KBM-7 (cell line): ENCODE measurements at regions of chr3 and their contacts with region 1.

Region 1: GRCh38 chr3:72818092-72818773 is 30.0 kb downstream of the SHQ1 start:
- DNase-seq: peak; percentile 21

Region 2: GRCh38 chr3:71710906-71711494 is 1107.2 kb before region 1 on chr3:
- in situ Hi-C with region 1: loop called (anchors 25 kb)
- DNase-seq: peak; percentile 46

Region 3: DNA sequence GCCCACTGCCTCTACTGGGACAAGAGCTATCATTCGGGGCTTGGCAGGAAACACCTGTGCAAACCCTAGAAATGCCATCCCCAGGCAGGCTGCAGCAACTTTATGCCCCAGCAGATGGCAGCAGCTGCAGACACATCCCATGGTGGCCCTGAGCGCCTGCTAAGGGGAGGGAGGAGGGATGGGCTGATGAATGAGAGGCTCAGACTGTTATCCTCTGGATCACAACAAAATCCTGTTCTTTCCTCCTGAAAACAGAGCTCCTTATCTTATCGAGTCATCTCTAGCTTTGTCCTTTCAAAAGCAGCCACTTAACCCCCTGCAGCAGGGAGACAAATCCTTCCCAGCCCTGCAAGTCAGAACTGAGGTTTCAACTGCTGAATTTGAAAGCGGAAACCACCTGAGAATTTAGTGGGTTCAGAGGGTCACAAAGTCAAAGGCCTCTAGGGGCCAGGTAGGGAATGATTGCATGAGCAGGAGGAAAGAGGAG is 942.7 kb before region 1 on chr3:
- in situ Hi-C with region 1: loop called (anchors 25 kb)
- DNase-seq: peak; percentile 77